ENCODE measurements at regions of chr13 and their contacts with region 1.

Region 1: GRCh38 chr13:27953676-27954405 is 15.3 kb downstream of the CDX2 start:
- DNase-seq: no peak
- ATAC-seq: peak; percentile 99
- H3K4me3 ChIP-seq: peak overlapping the region; percentile 43; the same call in 1 of the 2 replicates
- H3K27ac ChIP-seq: no peak overlapping the region
- H3K4me1 ChIP-seq: peaks cover 9% of the 10 kb centered on the region
- H3K27me3 ChIP-seq: peaks cover 9 to 10% of the 10 kb centered on the region in 2 experiments
- CTCF ChIP-seq: peak; percentile 81 to 88 (median 85)
- EP300 ChIP-seq: no peak
- POLR2A ChIP-seq: no peak
- RAD21 ChIP-seq: peak; percentile 82

Region 2: GRCh38 chr13:27362064-27362883 is 591.6 kb before region 1 on chr13:
- CTCF ChIA-PET with region 1: interaction called, 12 read pairs
- POLR2A ChIA-PET with region 1: no interaction called
- RAD21 ChIA-PET with region 1: interaction called, 7 read pairs
- SMC1A ChIA-PET with region 1: interaction called, 5 read pairs
- in situ Hi-C with region 1: no loop called
- intact Hi-C with region 1: no loop called
- DNase-seq: no peak
- ATAC-seq: peak; percentile 98
- H3K4me3 ChIP-seq: peak overlapping the region; percentile 29
- H3K27ac ChIP-seq: no peak overlapping the region
- H3K4me1 ChIP-seq: no peaks in the 10 kb centered on the region
- H3K27me3 ChIP-seq: peaks cover 3 to 4% of the 10 kb centered on the region in 2 experiments; a peak in 1 of 4 replicates
- CTCF ChIP-seq: peak; percentile 93 to 96 (median 95)
- EP300 ChIP-seq: no peak
- POLR2A ChIP-seq: no peak
- RAD21 ChIP-seq: peak; percentile 83

Region 3: GRCh38 chr13:27833206-27833605 is 120.6 kb before region 1 on chr13:
- CTCF ChIA-PET with region 1: interaction called, 360 read pairs
- POLR2A ChIA-PET with region 1: interaction called, 7 read pairs
- RAD21 ChIA-PET with region 1: interaction called, 163 read pairs
- SMC1A ChIA-PET with region 1: interaction called, 112 read pairs
- in situ Hi-C with region 1: no loop called
- intact Hi-C with region 1: loop called (anchors 1 kb)
- DNase-seq: no peak
- ATAC-seq: no peak
- H3K4me3 ChIP-seq: no peak overlapping the region
- H3K27ac ChIP-seq: no peak overlapping the region
- H3K4me1 ChIP-seq: no peaks in the 10 kb centered on the region
- H3K27me3 ChIP-seq: peaks cover 0 to 6% of the 10 kb centered on the region in 2 experiments
- CTCF ChIP-seq: no peak
- EP300 ChIP-seq: no peak
- POLR2A ChIP-seq: no peak
- RAD21 ChIP-seq: no peak

Region 4: GRCh38 chr13:27868641-27869435 is 85.0 kb before region 1 on chr13:
- CTCF ChIA-PET with region 1: interaction called, 126 read pairs
- POLR2A ChIA-PET with region 1: no interaction called
- RAD21 ChIA-PET with region 1: interaction called, 74 read pairs
- SMC1A ChIA-PET with region 1: interaction called, 43 read pairs
- in situ Hi-C with region 1: no loop called
- intact Hi-C with region 1: loop called (anchors 2 kb)
- DNase-seq: no peak
- ATAC-seq: peak; percentile 19; the same call in 1 of the 3 replicates
- H3K4me3 ChIP-seq: no peak overlapping the region
- H3K27ac ChIP-seq: no peak overlapping the region
- H3K4me1 ChIP-seq: no peaks in the 10 kb centered on the region
- H3K27me3 ChIP-seq: no peaks in the 10 kb centered on the region; a peak in 1 of 4 replicates
- CTCF ChIP-seq: peak; percentile 43 to 55 (median 48); a peak in 5 of 6 replicates
- EP300 ChIP-seq: no peak
- POLR2A ChIP-seq: no peak
- RAD21 ChIP-seq: peak; percentile 50

Region 5: GRCh38 chr13:27919934-27920676 is 33.7 kb before region 1 on chr13 and contains the start of gene PDX1:
- CTCF ChIA-PET with region 1: interaction called, 20 read pairs
- POLR2A ChIA-PET with region 1: no interaction called
- RAD21 ChIA-PET with region 1: interaction called, 21 read pairs
- SMC1A ChIA-PET with region 1: interaction called, 5 read pairs
- in situ Hi-C with region 1: no loop called
- intact Hi-C with region 1: no loop called
- DNase-seq: no peak
- ATAC-seq: no peak
- H3K4me3 ChIP-seq: no peak within 1 kb of the TSS
- H3K27ac ChIP-seq: no peak within 1 kb of the TSS
- H3K4me1 ChIP-seq: no peaks in the 10 kb centered on the region
- H3K27me3 ChIP-seq: peaks cover 20 to 44% of the 10 kb centered on the region in 2 experiments
- CTCF ChIP-seq: no peak
- EP300 ChIP-seq: no peak
- POLR2A ChIP-seq: no peak
- RAD21 ChIP-seq: no peak
- polyA plus RNA-seq, gene PDX1: 0.02 TPM in 1 of 2 experiments, not detected in the other

Region 6: DNA sequence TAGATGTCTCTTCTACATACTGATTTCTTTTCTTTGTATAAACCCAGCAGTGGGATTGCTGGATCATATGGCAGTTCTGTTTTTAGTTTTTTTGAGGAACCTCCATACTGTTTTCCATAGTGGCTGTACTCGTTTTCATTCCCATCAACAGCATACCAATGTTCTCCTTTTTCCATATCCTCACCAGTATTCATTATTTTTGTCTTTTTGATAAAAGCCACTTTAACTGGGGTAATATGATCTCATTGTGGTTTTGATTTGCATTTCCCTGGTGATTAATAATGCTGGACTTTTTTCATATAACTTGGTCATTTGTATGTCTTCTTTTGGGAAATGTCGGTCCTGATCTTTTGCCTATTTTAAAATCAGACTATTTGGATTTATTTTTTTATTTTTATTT is 293.1 kb after region 1 on chr13:
- CTCF ChIA-PET with region 1: no interaction called
- POLR2A ChIA-PET with region 1: no interaction called
- RAD21 ChIA-PET with region 1: no interaction called
- SMC1A ChIA-PET with region 1: no interaction called
- in situ Hi-C with region 1: no loop called
- intact Hi-C with region 1: no loop called
- DNase-seq: no peak
- ATAC-seq: no peak
- H3K4me3 ChIP-seq: no peak overlapping the region
- H3K27ac ChIP-seq: no peak overlapping the region
- H3K4me1 ChIP-seq: peaks cover 12% of the 10 kb centered on the region
- H3K27me3 ChIP-seq: no peaks in the 10 kb centered on the region
- CTCF ChIP-seq: no peak
- EP300 ChIP-seq: no peak
- POLR2A ChIP-seq: no peak
- RAD21 ChIP-seq: no peak